Activated CD4-positive, alpha-beta T cell treated with anti-CD3 and anti-CD28 coated beads for 36 hours (primary cell): ENCODE measurements at regions of chr7 and their contacts with region 1.

Region 1: GRCh38 chr7:22356701-22357353 is at the start of gene RAPGEF5:
- DNase-seq: peak; percentile 41
- ATAC-seq: peak; percentile 78
- H3K4me3 Mint-ChIP-seq: peak within 1 kb of the TSS; percentile 60
- H3K27ac Mint-ChIP-seq: no peak within 1 kb of the TSS
- H3K4me1 Mint-ChIP-seq: peaks cover 6% of the 10 kb centered on the region
- H3K27me3 Mint-ChIP-seq: peaks cover 41% of the 10 kb centered on the region
- total RNA-seq, gene RAPGEF5: 1.3 to 1.5 TPM

Region 2: GRCh38 chr7:20458521-20458920 is 1898.3 kb before region 1 on chr7:
- CTCF ChIA-PET with region 1: no interaction called
- POLR2A ChIA-PET with region 1: no interaction called
- intact Hi-C with region 1: no loop called
- DNase-seq: no peak
- ATAC-seq: no peak
- H3K4me3 Mint-ChIP-seq: no peak overlapping the region
- H3K27ac Mint-ChIP-seq: no peak overlapping the region
- H3K4me1 Mint-ChIP-seq: no peaks in the 10 kb centered on the region
- H3K27me3 Mint-ChIP-seq: no peaks in the 10 kb centered on the region

Region 3: DNA sequence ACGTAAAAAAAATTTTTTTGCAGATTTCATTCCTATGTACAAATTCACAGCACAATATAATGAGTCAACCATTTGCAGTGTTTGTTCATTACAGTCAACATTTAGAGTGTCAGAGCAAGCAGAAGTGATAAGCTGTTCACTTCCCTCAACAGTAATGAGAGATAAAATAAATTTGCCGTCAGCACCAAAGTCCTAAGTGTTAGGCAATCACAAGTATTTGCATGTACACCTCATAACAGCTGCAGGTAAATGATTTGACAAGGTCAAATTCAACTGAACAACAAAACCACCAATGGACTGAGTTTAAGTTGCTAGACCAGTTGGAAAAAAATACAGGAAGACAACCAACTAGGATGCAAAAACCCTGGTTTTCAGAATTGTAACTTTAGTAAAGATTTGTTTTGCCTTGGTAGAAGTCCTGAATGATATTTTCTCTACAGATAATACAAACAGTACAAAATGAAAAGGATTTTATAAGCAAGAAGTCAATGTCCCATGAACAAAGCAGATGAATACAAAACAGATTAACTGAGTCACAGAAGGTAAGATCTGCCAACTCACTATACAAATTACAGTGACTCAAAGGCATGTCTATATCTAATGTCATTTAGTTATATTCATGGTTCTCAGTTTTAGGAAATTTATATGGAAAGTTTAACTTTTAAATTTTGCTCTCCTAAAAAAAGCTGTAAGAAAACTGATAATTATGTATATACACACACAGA is 10.3 kb before region 1 on chr7:
- CTCF ChIA-PET with region 1: no interaction called
- POLR2A ChIA-PET with region 1: no interaction called
- intact Hi-C with region 1: no loop called
- DNase-seq: no peak
- ATAC-seq: no peak
- H3K4me3 Mint-ChIP-seq: no peak overlapping the region
- H3K27ac Mint-ChIP-seq: no peak overlapping the region
- H3K4me1 Mint-ChIP-seq: no peaks in the 10 kb centered on the region
- H3K27me3 Mint-ChIP-seq: peaks cover 11% of the 10 kb centered on the region

Region 4: GRCh38 chr7:22499044-22499443 is 142.2 kb after region 1 on chr7:
- CTCF ChIA-PET with region 1: no interaction called
- POLR2A ChIA-PET with region 1: no interaction called
- intact Hi-C with region 1: loop called in 1 of 2 experiments (anchors 5 kb)
- DNase-seq: no peak
- ATAC-seq: no peak
- H3K4me3 Mint-ChIP-seq: no peak overlapping the region
- H3K27ac Mint-ChIP-seq: no peak overlapping the region
- H3K4me1 Mint-ChIP-seq: peaks cover 4% of the 10 kb centered on the region
- H3K27me3 Mint-ChIP-seq: peaks cover 22% of the 10 kb centered on the region